SK-N-SH (cell line): ENCODE measurements at regions of chr1 and their contacts with region 1.

Region 1: DNA sequence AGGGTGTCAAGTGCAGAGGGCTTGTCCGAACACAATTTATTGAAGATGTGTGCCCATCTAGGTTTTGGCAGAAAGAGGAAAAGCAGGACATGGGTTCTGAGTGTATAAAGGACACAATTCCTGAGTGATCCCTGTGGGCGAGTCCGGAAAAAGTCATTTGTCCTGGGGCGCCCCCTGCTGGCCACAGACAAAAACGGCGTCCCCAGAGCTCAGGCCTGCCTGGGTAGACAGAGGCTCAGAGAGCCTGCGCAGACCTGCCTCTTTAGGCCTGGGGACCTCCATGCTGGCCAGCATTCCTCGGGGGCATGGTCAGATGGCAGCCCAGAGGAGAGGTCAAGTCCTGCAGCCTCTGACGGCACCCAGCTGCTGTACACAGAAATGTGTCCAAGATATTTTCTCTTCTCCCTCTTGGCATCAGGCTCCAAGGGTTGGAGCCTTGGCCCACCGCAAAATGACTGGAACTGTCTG is 65.5 kb upstream of the LRP8 start:
- DNase-seq: peak; percentile 86
- H3K4me3 ChIP-seq: peak overlapping the region in 1 of 2 experiments; percentile 2; a peak in 1 of 4 replicates
- H3K27ac ChIP-seq: no peak overlapping the region
- H3K4me1 ChIP-seq: peaks cover 0 to 44% of the 10 kb centered on the region in 2 experiments; a peak in 2 of 4 replicates
- H3K27me3 ChIP-seq: peaks cover 2% of the 10 kb centered on the region; the same call in 1 of the 2 replicates
- CTCF ChIP-seq: peak; percentile 89
- EP300 ChIP-seq: 0 out of 4 replicates have a peak, but pooled peaks of 1 of the 2 experiments have one; percentile 10
- RAD21 ChIP-seq: peak; percentile 97

Region 2: GRCh38 chr1:52571783-52572182 is 821.6 kb before region 1 on chr1:
- CTCF ChIA-PET with region 1: no interaction called
- POLR2A ChIA-PET with region 1: no interaction called
- DNase-seq: no peak
- H3K4me3 ChIP-seq: no peak overlapping the region
- H3K27ac ChIP-seq: no peak overlapping the region
- H3K4me1 ChIP-seq: peaks cover 0 to 12% of the 10 kb centered on the region in 2 experiments; a peak in 1 of 4 replicates
- H3K27me3 ChIP-seq: no peaks in the 10 kb centered on the region
- CTCF ChIP-seq: no peak
- EP300 ChIP-seq: no peak
- RAD21 ChIP-seq: no peak

Region 3: GRCh38 chr1:53266106-53266505 is 127.3 kb before region 1 on chr1:
- CTCF ChIA-PET with region 1: interaction called, 410 read pairs
- POLR2A ChIA-PET with region 1: no interaction called
- DNase-seq: no peak
- H3K4me3 ChIP-seq: no peak overlapping the region
- H3K27ac ChIP-seq: no peak overlapping the region
- H3K4me1 ChIP-seq: no peaks in the 10 kb centered on the region
- H3K27me3 ChIP-seq: no peaks in the 10 kb centered on the region
- CTCF ChIP-seq: peak; percentile 37
- EP300 ChIP-seq: no peak
- RAD21 ChIP-seq: peak; percentile 50

Region 4: GRCh38 chr1:53315456-53316423 is 77.6 kb before region 1 on chr1:
- CTCF ChIA-PET with region 1: interaction called, 27 read pairs
- POLR2A ChIA-PET with region 1: interaction called, 3 read pairs
- DNase-seq: peak; percentile 86
- H3K4me3 ChIP-seq: no peak overlapping the region
- H3K27ac ChIP-seq: peak overlapping the region; percentile 28 to 100; a peak in 3 of 4 replicates
- H3K4me1 ChIP-seq: peaks cover 0 to 92% of the 10 kb centered on the region in 2 experiments; a peak in 2 of 4 replicates
- H3K27me3 ChIP-seq: no peaks in the 10 kb centered on the region
- CTCF ChIP-seq: no peak
- EP300 ChIP-seq: peak in 1 of 2 experiments; percentile 52; a peak in 1 of 4 replicates
- RAD21 ChIP-seq: peak; percentile 29

Region 5: DNA sequence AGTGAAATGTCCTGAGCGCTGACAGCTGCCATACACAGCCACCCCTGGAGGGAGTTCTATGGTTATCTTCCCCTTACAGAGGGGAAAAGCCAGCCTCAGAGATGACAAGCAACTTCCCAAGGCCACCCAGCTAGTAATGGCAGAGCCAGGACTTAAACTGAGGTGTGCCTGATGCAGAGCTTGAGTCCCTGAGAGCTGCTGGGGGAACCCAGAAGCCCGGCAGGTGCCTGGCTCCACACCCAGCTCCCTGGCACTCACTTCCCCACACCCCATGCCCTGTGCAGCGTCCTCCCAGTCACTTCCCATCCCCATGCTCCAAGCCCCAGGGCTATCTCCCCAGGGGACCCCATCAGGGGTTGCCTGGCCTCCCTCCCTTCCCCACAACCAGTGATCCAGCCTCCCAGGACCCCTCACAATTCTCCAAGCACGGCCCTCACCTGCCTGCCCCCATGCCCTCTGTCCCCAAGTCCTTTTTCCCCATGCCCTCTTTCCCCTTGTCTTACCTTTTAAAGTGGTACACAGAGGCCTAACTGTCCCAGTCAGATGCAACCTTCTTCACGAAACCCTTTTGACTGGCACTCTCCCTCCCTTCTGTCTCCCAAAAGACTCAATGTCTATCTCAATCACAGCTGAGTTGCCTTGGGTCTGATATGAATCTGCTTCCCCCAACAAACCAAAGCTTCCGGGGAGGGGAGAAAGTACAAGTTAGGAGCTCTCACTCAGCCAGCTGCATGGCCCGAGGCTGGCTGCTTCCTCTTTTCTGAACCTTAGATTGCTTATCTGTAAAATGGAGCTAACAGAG is 25.7 kb before region 1 on chr1:
- CTCF ChIA-PET with region 1: interaction called, 15 read pairs
- POLR2A ChIA-PET with region 1: interaction called, 3 read pairs
- DNase-seq: peak; percentile 58
- H3K4me3 ChIP-seq: no peak overlapping the region
- H3K27ac ChIP-seq: peak overlapping the region in 1 of 2 experiments; percentile 51; a peak in 1 of 4 replicates
- H3K4me1 ChIP-seq: peaks cover 0 to 37% of the 10 kb centered on the region in 2 experiments; a peak in 1 of 4 replicates
- H3K27me3 ChIP-seq: no peaks in the 10 kb centered on the region
- CTCF ChIP-seq: no peak
- EP300 ChIP-seq: peak in 1 of 2 experiments; percentile 60; a peak in 1 of 4 replicates
- RAD21 ChIP-seq: 0 out of 2 replicates have a peak, but pooled peaks have one; percentile 1

Region 6: DNA sequence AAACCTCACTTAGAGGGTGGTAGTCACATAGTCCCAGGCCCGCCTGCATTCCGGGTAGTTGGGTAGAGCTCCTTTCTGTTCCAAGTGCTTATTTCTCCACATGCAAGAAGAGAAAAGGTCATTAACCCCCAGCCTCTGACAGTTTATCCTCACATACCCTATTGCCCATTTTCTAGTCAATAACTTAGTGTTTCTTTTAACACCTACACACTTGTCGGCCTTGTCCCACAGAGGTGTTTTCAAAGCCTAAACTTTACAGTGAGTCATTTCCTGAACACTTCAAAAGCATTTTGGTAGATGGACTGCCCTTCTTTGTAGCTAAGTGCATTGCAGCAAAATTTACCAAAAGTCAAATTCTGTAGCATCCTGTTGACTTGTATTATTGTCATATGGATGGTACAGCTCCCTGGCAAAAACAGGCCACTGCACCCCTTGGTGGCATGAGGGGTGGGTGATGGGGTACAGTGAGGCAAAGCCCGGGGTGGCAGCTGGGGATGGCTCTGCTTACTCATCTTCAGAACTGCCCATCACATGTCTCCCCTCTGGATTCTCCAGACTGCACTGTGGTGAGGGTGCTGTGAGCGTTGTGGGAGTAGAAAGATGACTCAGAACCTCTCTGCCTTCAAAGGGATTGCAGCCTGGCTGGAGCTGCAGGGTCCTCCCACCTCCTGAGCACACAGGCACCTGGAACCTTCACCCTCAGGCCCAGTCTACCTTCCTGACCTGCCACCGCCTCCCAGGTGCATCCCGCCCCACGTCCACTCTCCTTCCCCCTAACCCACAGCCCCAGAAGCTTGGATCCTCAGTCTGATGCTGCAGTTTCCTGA is 20.0 kb after region 1 on chr1:
- CTCF ChIA-PET with region 1: interaction called, 22 read pairs
- POLR2A ChIA-PET with region 1: interaction called, 3 read pairs
- DNase-seq: no peak
- H3K4me3 ChIP-seq: no peak overlapping the region
- H3K27ac ChIP-seq: peak overlapping the region in 1 of 2 experiments; percentile 56; a peak in 2 of 4 replicates
- H3K4me1 ChIP-seq: peaks cover 17 to 41% of the 10 kb centered on the region in 2 experiments; a peak in 3 of 4 replicates
- H3K27me3 ChIP-seq: no peaks in the 10 kb centered on the region; the same call in 1 of the 2 replicates
- CTCF ChIP-seq: no peak
- EP300 ChIP-seq: no peak
- RAD21 ChIP-seq: no peak

Region 7: GRCh38 chr1:53982034-53982762 is 588.8 kb after region 1 on chr1:
- CTCF ChIA-PET with region 1: no interaction called
- POLR2A ChIA-PET with region 1: no interaction called
- DNase-seq: peak; percentile 33
- H3K4me3 ChIP-seq: no peak overlapping the region
- H3K27ac ChIP-seq: no peak overlapping the region
- H3K4me1 ChIP-seq: no peaks in the 10 kb centered on the region
- H3K27me3 ChIP-seq: no peaks in the 10 kb centered on the region
- CTCF ChIP-seq: no peak
- EP300 ChIP-seq: no peak
- RAD21 ChIP-seq: no peak